ENCODE measurements at regions of chr5 and their contacts with region 1.

Region 1: DNA sequence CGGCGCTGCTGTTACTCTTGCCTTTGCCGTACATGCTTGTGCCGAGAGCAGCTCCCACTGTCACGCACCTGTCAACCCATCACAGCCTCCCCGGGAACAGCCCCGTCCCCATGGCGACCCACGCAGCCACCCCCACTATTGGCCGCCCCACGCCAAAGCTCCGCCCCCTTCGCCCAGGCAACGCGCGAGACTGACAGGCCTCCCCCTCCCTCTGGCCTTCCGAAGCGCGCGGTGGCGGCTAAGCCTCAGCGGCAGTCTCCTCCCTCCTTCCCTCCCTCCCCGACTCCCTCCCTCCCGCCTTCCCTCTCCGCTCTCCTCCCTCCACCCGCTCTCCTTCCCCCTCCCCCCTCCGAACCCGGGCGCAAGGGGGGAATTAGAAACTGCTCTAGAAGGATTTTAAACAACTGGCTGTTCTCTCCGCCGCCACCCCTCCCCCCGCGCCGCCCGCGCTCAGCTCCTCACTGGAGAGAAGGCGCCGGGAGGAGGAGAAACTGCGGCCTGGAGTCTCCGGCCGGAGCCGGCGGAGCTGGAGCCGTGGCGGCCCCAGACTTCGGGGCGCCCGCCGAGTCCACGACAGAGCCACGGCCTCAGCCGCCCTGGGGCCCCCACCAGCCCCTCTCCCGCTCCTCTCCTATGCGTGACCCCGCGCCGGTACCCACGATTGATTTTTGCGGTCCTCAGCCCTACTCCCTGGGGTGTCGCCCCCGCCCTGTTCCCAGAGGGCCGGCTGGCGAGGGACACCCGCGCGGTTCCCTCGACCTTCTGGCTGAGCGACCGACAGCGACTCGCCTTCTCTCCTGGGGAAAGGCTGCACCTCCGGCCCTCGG is at the start of gene SSBP2:
- DNase-seq: peak; percentile 98 to 100
- ATAC-seq: peak; percentile 76 to 81
- H3K4me3 ChIP-seq: peak within 1 kb of the TSS; percentile 81 to 84 (median 82)
- H3K27ac ChIP-seq: peak within 1 kb of the TSS; percentile 86 to 99 (median 98)
- H3K4me1 ChIP-seq: peaks cover 41 to 59% of the 10 kb centered on the region in 2 donors
- H3K27me3 ChIP-seq: no peaks in the 10 kb centered on the region
- CTCF ChIP-seq: peak in 1 of 5 experiments; percentile 30
- POLR2A ChIP-seq: peak; percentile 68 to 84
- total RNA-seq, gene SSBP2: 30.4 to 66.5 (median 40.5) TPM

Region 2: DNA sequence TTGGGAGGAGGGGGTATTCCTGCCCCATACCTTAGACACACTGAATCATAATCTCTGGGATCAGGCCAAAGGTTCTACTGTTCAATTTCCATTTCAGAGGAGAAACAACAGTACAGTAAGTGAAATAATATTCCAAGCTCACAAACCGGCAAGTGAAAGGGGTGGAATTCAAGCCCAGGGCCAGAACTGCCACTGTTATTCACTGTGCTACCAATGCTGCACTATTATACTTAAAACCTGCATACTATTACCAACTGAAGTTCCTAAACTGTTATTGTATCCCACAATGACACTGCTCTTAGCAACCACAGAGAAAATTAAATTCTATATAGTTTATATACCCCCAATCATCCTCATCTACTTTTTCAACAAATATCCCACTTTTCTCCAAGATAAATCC is 24.9 kb before region 1 on chr5:
- in situ Hi-C with region 1: no loop called
- intact Hi-C with region 1: no loop called
- DNase-seq: no peak
- ATAC-seq: no peak
- H3K4me3 ChIP-seq: no peak overlapping the region
- H3K27ac ChIP-seq: no peak overlapping the region
- H3K4me1 ChIP-seq: peaks cover 41 to 53% of the 10 kb centered on the region in 2 donors
- H3K27me3 ChIP-seq: no peaks in the 10 kb centered on the region
- CTCF ChIP-seq: no peak
- POLR2A ChIP-seq: no peak

Region 3: GRCh38 chr5:81787474-81788242 is 36.4 kb after region 1 on chr5:
- in situ Hi-C with region 1: loop called in 1 of 4 experiments (anchors 5 kb)
- intact Hi-C with region 1: loop called (anchors 1 kb)
- DNase-seq: peak; percentile 63 to 68
- ATAC-seq: peak; percentile 49 to 70
- H3K4me3 ChIP-seq: peak overlapping the region in 3 of 4 donors; percentile 11 to 27 (median 14)
- H3K27ac ChIP-seq: peak overlapping the region; percentile 55 to 64 (median 58)
- H3K4me1 ChIP-seq: peaks cover 34 to 38% of the 10 kb centered on the region in 2 donors
- H3K27me3 ChIP-seq: no peaks in the 10 kb centered on the region
- CTCF ChIP-seq: no peak
- POLR2A ChIP-seq: no peak

Region 4: DNA sequence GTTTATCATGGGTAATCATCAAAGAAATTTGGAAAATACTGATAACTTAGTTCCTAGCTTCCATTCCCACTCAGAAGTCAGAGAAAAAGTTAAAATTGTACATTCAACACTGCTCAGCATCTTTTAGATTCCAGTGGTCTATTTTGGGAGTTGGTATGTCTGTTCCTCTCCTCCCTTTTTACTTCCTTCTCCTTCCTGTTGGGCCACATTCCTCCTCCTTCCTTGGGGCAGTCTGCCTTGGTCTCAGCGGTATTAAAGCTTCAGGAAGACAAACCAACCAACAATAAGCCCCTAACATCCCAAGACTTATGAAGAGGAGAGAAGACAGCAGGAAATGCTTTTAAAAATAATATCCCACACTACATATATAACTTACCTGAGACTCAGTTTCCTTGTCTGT is 49.6 kb after region 1 on chr5:
- in situ Hi-C with region 1: no loop called
- intact Hi-C with region 1: no loop called
- DNase-seq: no peak
- ATAC-seq: no peak
- H3K4me3 ChIP-seq: no peak overlapping the region
- H3K27ac ChIP-seq: no peak overlapping the region
- H3K4me1 ChIP-seq: no peaks in the 10 kb centered on the region
- H3K27me3 ChIP-seq: no peaks in the 10 kb centered on the region
- CTCF ChIP-seq: no peak
- POLR2A ChIP-seq: no peak

Region 5: DNA sequence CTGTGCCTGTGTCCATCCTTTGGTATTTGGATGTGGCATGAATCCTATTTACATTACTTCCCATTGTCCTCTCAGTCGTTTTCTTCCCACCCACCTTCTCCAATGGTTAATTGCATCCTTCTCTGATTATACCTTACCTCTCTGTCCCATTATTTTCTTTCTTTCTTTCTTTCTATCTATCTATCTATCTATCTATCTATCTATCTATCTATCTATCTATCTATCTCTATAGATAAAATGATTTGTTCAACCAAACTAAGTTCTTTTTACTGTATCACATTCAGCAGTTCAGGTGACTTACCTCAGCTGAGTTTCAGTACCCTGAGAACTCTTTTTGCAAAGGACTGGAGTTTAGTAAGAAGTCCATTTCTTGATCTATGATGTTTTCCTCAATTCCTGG is 446.3 kb after region 1 on chr5:
- in situ Hi-C with region 1: no loop called
- intact Hi-C with region 1: no loop called
- DNase-seq: no peak
- ATAC-seq: no peak
- H3K4me3 ChIP-seq: no peak overlapping the region
- H3K27ac ChIP-seq: no peak overlapping the region
- H3K4me1 ChIP-seq: no peaks in the 10 kb centered on the region
- H3K27me3 ChIP-seq: no peaks in the 10 kb centered on the region
- CTCF ChIP-seq: no peak
- POLR2A ChIP-seq: no peak